Activated naive CD4-positive, alpha-beta T cell treated with anti-CD3 and anti-CD28 coated beads for 36 hours (primary cell): ENCODE measurements at regions of chr19 and their contacts with region 1.

Region 1: DNA sequence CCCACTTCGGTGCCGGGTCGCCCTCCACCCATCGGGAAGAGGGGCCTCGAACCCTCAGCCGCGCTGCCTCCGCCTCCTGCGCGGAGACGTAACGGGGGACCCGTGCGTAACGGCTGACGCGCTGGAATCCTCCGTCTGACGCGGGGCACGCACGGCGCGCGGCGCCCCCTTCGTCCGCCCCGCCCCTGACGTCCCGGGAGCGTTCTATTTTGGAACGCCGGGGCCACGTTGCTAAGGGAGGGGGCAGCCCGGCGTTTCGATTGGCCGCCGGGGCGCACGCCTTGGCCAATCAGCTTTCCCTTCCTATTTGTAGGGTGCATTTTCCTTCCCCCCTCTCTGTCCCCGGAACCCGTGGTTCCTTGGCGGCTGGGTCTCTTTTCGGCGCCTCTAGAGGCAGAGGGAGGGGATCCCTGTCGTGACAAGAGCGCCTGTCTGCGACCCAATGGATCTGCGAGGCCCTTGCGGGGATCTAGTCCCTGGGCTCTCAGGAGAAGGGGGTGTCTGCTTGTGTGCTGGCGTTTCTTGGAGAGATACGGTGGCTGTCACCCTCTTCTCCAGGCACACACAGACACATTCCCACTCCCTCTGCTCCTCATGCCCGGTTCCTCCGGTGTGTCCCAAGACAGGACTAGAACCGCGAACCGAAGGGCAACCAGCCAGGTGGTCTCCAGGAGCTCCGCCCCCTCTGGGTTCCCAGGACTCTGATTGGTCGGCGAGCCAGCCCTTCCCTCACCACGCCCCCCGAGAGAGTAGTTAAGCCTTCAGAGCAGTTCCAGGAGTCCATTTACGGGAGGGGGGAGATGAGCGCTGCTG is 1.5 kb downstream of the FOSB start:
- DNase-seq: peak; percentile 91
- H3K4me3 Mint-ChIP-seq: peak overlapping the region; percentile 77
- H3K27ac Mint-ChIP-seq: peak overlapping the region; percentile 75
- H3K4me1 Mint-ChIP-seq: peaks cover 42% of the 10 kb centered on the region
- H3K27me3 Mint-ChIP-seq: peaks cover 26% of the 10 kb centered on the region

Region 2: DNA sequence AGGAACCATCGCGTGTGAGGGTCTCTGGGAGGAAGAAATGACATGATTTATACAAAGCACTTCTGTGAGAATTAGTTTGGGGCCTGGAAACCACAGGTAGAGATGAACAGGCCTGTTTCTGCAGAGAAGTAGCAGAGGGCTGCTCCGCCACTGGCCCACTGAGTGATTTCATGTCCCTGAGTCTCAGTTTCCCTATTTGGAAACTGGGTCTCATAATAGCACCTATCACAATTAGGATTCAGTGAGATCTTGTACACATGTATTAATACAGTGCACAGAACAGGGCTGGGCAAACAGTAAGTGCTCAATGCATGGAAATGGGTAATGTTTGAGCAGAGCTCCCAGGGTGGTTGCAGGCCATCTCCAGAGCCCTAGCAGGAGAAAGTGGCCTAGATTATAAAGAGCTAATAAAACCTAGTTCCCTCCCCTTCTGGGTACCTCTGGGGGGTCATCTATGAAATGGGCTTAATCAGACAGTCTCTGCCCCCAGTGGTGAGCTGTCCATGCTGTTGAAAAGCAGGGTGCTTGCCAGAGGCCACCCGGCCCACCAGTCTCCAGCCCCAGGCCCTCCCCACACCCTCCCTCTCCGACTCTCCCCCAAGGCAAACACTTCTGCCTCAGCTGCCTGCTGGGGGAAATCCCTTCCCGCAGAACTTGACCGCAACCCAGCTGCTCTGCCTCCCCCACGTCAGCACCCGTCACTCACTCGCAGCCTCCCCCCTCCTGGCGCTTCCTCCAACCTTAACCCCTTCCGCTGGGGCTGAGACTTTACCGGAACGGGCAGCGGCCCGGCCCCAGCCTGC is 716.3 kb before region 1 on chr19:
- CTCF ChIA-PET with region 1: no interaction called
- intact Hi-C with region 1: loop called (anchors 5 kb)
- DNase-seq: peak; percentile 98
- H3K4me3 Mint-ChIP-seq: peak overlapping the region; percentile 93
- H3K27ac Mint-ChIP-seq: peak overlapping the region; percentile 97
- H3K4me1 Mint-ChIP-seq: peaks cover 59% of the 10 kb centered on the region
- H3K27me3 Mint-ChIP-seq: no peaks in the 10 kb centered on the region

Region 3: DNA sequence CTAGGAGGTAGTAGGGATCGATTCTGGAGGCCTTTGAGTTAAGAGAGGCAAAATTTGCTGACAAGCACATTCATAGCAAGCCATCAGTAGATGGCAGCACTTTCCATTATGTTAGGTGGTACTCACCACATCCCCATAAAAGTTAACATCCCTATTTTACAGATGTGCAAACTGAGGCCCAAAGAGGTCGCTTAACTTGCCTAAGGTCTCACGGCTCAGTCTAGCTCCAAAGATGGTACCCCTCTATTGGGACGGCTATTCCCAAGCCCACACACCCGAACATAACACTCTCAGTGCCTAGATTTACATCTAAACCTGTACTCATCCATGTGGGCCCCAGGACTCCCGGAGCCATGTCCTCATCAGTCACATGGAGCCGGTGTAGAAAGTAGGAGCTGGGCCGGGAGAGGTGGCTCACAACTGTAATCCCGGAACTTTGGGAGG is 23.0 kb before region 1 on chr19:
- CTCF ChIA-PET with region 1: interaction called, 351 read pairs
- intact Hi-C with region 1: loop called (anchors 1 kb)
- DNase-seq: peak; percentile 32
- H3K4me3 Mint-ChIP-seq: no peak overlapping the region
- H3K27ac Mint-ChIP-seq: no peak overlapping the region
- H3K4me1 Mint-ChIP-seq: peaks cover 36% of the 10 kb centered on the region
- H3K27me3 Mint-ChIP-seq: no peaks in the 10 kb centered on the region

Region 4: GRCh38 chr19:45485305-45486077 is 16.2 kb after region 1 on chr19:
- CTCF ChIA-PET with region 1: interaction called, 37 read pairs
- intact Hi-C with region 1: loop called (anchors 2 kb)
- DNase-seq: peak; percentile 99
- H3K4me3 Mint-ChIP-seq: peak overlapping the region; percentile 81
- H3K27ac Mint-ChIP-seq: peak overlapping the region; percentile 46
- H3K4me1 Mint-ChIP-seq: peaks cover 4% of the 10 kb centered on the region
- H3K27me3 Mint-ChIP-seq: no peaks in the 10 kb centered on the region